ENCODE measurements at regions of chr14 and their contacts with region 1.

Region 1: DNA sequence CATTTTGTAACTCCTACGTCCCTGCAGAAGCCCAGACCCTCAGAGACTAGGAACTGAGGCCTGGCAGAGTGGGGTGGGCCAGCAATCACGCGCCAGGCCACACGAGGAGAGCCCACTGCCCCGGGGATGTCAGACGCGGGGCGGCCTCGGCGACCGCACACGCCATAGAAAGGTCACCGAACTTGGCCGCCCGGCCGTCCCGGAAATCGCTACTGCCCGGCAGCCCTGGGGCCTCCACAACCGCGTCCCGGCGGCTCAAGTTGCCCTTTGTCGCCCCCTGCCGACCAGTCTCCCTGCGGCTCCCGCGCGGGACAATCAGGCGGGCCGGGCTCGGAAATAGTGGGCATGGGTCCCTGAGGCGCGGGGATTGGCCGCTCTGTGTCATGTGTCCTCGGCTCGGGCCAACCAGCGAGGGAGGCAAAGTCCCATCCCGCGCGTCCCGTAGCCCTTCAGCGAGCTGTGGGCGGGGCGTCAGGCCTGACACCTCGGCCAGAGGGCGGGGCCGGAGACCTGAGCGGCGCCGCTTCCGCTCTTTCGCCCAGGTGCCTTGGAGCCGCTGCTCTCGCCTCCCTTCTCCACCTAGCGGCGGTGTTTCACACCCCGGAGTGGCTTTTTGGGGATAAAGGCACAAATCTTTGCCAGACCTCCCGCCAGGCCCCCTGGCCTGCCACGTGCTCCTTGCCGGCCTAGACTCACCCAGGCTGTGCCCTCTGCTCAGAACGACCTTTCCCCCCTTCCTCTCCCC is 33.4 kb upstream of the DEGS2 start:
- DNase-seq: peak; percentile 100
- H3K4me3 Mint-ChIP-seq: peak overlapping the region; percentile 73
- H3K27ac Mint-ChIP-seq: peak overlapping the region; percentile 86
- H3K4me1 Mint-ChIP-seq: peaks cover 14% of the 10 kb centered on the region
- H3K27me3 Mint-ChIP-seq: no peaks in the 10 kb centered on the region

Region 2: GRCh38 chr14:99683619-99684355 is 509.1 kb before region 1 on chr14 and contains the start of gene CYP46A1:
- CTCF ChIA-PET with region 1: no interaction called
- POLR2A ChIA-PET with region 1: no interaction called
- intact Hi-C with region 1: loop called (anchors 10 kb)
- DNase-seq: peak; percentile 100
- H3K4me3 Mint-ChIP-seq: peak within 1 kb of the TSS; percentile 84
- H3K27ac Mint-ChIP-seq: peak within 1 kb of the TSS; percentile 71
- H3K4me1 Mint-ChIP-seq: peaks cover 3% of the 10 kb centered on the region
- H3K27me3 Mint-ChIP-seq: peaks cover 5% of the 10 kb centered on the region
- total RNA-seq, gene CYP46A1: 0.19 to 0.21 TPM

Region 3: GRCh38 chr14:100056964-100057795 is 135.7 kb before region 1 on chr14:
- CTCF ChIA-PET with region 1: interaction called, 12 read pairs
- POLR2A ChIA-PET with region 1: no interaction called
- intact Hi-C with region 1: loop called (anchors 2 kb)
- DNase-seq: no peak
- H3K4me3 Mint-ChIP-seq: no peak overlapping the region
- H3K27ac Mint-ChIP-seq: peak overlapping the region; percentile 56
- H3K4me1 Mint-ChIP-seq: peaks cover 49% of the 10 kb centered on the region
- H3K27me3 Mint-ChIP-seq: no peaks in the 10 kb centered on the region

Region 4: DNA sequence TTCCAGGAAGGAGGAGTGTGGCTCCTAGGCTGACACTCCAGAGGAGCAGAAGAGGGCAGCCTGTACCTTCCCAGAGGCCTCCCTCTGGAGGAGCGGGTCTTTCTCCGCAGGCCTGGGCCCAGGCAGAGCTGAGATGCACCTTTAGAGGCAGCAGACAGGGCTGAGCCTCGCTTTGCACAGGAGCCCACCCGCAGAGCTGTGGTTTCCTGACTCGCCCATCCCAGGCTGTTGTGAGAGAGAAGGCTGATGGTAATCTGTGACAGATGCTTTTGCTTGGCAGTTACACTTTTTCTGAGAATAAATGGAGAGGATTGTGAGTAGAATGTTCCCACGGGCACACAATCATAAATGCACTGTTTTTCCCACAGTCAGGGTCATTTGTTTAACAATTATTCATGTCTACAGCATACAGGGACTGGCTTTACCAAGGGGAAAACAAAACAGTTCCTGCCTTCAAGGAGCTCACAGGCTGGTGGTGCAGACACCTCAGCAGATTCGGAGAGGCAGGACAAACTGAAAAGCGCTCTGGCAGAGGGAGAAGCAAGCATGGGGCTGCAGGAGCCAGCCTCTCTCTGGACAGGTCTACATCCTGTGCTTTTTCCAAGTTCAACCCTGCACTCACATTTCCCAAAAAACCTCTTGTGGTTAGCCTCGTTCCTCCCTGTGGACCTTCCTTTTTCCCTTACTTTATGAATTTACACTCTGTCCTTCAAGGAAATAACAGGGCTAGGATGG is 113.7 kb before region 1 on chr14:
- CTCF ChIA-PET with region 1: interaction called, 15 read pairs
- POLR2A ChIA-PET with region 1: interaction called, 3 read pairs
- intact Hi-C with region 1: no loop called
- DNase-seq: peak; percentile 88
- H3K4me3 Mint-ChIP-seq: peak overlapping the region; percentile 63
- H3K27ac Mint-ChIP-seq: peak overlapping the region; percentile 87
- H3K4me1 Mint-ChIP-seq: peaks cover 96% of the 10 kb centered on the region
- H3K27me3 Mint-ChIP-seq: no peaks in the 10 kb centered on the region

Region 5: DNA sequence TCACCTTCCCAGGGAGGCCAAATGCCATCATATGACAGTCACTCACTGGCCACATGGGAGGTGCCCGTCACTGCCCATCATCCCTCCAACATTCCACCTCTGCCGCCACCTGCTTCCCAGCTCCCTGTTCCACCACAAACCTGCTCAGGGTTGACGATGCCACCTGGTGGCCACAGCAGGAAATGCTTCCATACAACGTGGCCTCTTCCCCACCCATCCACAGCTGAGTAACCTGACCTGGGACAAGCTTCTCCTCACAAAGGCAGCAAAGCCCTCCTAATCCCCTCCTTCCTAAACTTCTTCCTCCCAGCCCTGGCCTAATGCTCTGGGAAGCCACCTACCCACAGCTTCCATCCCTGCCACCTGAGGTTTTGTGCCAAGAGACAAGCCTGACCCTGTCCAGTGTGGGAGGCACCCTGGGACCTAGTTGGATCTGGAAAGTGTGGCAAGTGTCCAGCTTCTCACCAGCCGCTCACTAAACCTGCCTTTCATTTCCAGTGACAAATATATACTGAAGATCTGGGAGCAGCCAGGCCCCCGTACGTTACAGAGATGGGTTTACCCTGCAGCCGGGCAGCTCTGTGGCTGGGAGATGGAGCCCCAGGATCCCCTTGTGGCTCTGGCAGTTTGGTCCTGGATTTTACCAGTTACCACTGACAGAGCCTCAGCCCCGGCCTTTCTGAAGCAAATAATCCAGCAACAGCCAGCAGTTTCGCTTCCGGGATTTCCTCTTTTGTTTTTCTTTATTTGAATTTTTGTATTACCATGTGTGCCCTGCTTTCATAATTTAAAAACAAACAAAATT is 37.6 kb before region 1 on chr14:
- CTCF ChIA-PET with region 1: interaction called, 12 read pairs
- POLR2A ChIA-PET with region 1: interaction called, 3 read pairs
- intact Hi-C with region 1: no loop called
- DNase-seq: peak; percentile 64
- H3K4me3 Mint-ChIP-seq: no peak overlapping the region
- H3K27ac Mint-ChIP-seq: peak overlapping the region; percentile 7
- H3K4me1 Mint-ChIP-seq: peaks cover 3% of the 10 kb centered on the region
- H3K27me3 Mint-ChIP-seq: peaks cover 26% of the 10 kb centered on the region

Region 6: DNA sequence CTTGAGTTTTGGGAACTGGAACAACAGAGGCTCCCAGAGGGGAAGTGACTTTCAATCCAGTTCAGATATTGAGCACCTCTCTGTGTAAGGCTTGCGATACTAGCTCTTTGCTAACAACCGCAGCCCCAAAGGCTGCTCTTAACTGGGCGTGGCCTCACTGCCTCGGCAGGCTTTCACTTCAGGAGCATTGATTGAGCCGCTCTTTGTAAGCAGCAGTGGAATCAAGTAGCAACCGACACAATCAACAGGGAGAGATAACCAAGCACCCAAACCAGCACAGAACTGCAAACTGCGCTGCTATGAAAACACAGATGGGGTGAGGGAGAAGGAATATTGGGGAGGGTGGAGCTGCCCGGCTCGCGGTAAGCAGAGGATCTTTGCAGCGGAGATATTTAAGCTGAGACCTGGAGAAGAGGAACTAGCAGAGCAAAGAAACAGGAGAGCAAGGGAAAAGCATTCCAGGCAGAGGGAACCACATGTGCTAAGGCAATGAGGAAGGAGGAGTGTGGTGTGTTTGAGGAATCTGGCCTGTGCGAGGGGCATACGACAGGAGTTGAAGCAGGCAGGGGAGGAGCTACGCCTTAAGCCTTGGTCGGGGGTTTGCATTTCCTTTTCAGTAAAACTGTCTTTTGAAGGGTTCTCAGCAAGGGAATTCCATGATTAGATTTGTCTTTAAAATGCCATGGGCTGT is 28.8 kb after region 1 on chr14:
- CTCF ChIA-PET with region 1: interaction called, 54 read pairs
- POLR2A ChIA-PET with region 1: interaction called, 8 read pairs
- intact Hi-C with region 1: no loop called
- DNase-seq: peak; percentile 82
- H3K4me3 Mint-ChIP-seq: no peak overlapping the region
- H3K27ac Mint-ChIP-seq: no peak overlapping the region
- H3K4me1 Mint-ChIP-seq: peaks cover 4% of the 10 kb centered on the region
- H3K27me3 Mint-ChIP-seq: no peaks in the 10 kb centered on the region

Region 7: DNA sequence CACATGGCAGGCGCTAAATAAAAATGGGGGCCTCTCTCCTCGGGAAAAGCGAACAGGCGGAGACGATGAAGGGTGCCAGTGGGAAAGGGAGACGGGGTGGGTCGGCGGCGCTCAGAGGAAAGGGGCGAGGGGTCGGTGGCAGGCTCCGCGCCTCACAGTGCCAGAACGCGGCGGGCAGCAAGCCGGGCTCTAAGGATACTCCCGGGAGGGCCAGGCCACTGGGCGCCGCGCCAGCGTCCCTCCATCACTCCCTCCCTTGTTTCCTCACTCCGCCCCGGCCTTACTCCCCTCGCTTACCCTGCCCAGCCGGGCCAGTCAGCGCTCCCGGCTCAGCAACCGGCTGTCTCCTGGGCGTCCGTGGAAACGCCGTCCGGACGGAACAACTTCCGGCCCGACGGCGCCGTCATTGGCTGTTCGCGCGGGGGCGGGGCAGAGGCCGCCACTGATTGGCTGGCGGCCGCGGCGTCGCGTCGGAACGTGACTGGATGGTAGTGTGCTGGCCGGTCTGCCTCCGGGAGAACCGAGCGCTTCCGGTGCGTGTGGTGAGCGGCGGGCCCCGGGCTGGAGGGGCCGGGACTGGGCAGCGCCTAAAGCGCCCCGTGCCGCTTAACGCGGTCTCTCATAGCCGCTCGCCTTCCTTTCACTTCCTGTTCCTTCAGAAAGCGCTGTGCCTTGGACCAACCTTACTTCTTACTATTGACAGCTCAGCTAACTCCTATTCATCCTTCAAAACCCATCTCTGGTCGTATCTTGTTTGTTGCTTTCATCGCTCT is 183.3 kb after region 1 on chr14:
- CTCF ChIA-PET with region 1: interaction called, 4 read pairs
- POLR2A ChIA-PET with region 1: no interaction called
- intact Hi-C with region 1: loop called (anchors 2 kb)
- DNase-seq: peak; percentile 96
- H3K4me3 Mint-ChIP-seq: peak within 1 kb of the TSS; percentile 98
- H3K27ac Mint-ChIP-seq: peak within 1 kb of the TSS; percentile 100
- H3K4me1 Mint-ChIP-seq: peaks cover 47% of the 10 kb centered on the region
- H3K27me3 Mint-ChIP-seq: peaks cover 1% of the 10 kb centered on the region